ENCODE measurements at regions of chr3 and their contacts with region 1.

Region 1: DNA sequence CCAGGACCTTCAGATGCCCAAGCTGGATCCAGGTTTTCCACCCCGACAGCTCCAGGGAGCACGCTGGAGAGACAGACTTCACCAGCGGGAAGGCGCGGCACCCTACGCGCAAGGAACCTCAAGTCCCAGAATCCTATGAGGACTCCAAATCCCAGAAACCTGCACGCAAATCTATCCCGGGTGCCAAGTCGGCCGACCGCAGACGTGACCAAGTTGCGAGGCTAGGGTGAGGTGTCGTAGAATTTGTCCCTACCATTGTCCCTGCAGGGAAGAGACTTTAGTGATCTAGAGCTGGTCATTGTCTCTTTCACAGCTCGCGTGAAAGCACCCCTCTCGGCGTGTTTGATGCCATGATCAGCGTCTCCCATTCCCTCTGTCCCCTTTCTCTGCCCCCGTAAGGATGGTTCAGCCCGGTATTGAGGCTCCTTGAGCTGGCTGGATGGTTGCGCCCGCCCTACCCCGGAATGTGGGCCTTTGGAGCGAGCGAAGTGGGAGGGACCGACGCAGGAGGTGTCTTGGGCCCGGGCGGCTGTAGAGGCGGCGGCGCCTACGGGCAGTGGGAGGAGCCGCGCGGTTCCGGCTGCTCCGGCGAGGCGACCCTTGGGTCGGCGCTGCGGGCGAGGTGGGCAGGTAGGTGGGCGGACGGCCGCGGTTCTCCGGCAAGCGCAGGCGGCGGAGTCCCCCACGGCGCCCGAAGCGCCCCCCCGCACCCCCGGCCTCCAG is at the start of gene PRKCI:
- DNase-seq: peak; percentile 98
- ATAC-seq: peak; percentile 100
- H3K4me3 ChIP-seq: peak within 1 kb of the TSS; percentile 57 to 91
- H3K27ac ChIP-seq: peak within 1 kb of the TSS in 1 of 2 donors; percentile 91
- H3K4me1 ChIP-seq: no peaks in the 10 kb centered on the region
- H3K27me3 ChIP-seq: no peaks in the 10 kb centered on the region
- total RNA-seq, gene PRKCI: 33.0 to 33.6 TPM

Region 2: DNA sequence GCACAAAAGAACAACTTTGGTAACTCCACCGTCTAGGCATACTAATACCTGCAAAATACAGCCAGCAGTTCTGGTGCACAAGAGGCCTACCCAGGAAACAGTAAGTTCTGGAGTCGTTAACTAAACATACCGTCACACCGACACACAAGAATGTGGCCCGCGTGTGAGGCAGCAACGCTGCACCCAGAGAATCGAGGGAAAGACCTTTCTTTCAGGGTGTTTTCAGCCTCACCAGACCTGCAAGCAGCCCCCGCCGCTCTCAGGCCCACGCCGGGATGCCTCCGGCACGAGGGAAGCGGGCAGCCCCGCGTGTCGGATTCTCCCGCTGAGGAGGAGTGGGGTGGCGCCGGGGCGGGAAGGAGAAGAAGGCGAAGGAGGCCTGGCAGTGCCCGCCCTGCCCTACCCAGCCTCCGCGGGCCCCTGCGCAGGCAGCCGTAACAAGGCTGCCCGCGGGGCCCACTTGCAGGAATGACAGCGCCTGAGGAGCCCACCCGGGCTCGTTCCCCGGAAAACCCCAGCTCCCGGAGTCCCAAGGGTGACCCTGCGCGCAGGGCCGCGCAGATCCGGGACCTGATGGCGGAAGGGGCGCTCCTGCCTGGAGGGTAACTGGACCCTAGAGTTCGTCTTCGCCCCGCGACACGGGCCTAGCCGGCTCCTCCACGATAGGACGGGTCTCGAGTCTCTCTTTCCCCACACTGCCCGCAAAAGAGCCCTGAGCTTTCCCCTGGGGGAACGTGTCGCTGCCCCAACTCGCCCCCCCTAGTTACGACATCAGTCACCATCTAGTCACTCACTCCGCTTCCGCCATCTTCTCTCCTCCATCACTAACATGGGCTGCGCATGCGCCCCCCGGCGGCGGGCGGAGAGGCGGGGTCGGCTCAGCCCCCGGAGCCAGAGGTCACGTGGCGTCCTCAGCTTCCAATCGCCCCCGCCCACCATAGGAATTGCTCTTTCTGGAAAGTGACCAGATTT is 40.9 kb before region 1 on chr3 and contains the start of gene PHC3:
- intact Hi-C with region 1: loop called (anchors 5 kb)
- DNase-seq: peak; percentile 95 to 97
- ATAC-seq: peak; percentile 96
- H3K4me3 ChIP-seq: peak within 1 kb of the TSS; percentile 73 to 84
- H3K27ac ChIP-seq: peak within 1 kb of the TSS; percentile 77 to 88
- H3K4me1 ChIP-seq: no peaks in the 10 kb centered on the region
- H3K27me3 ChIP-seq: no peaks in the 10 kb centered on the region
- total RNA-seq, gene PHC3: 108 to 131 TPM

Measured in aorta (tissue), 5 donors.